Esophagus squamous epithelium (tissue), 5 donors: ENCODE measurements at regions of chr9 and their contacts with region 1.

Region 1: DNA sequence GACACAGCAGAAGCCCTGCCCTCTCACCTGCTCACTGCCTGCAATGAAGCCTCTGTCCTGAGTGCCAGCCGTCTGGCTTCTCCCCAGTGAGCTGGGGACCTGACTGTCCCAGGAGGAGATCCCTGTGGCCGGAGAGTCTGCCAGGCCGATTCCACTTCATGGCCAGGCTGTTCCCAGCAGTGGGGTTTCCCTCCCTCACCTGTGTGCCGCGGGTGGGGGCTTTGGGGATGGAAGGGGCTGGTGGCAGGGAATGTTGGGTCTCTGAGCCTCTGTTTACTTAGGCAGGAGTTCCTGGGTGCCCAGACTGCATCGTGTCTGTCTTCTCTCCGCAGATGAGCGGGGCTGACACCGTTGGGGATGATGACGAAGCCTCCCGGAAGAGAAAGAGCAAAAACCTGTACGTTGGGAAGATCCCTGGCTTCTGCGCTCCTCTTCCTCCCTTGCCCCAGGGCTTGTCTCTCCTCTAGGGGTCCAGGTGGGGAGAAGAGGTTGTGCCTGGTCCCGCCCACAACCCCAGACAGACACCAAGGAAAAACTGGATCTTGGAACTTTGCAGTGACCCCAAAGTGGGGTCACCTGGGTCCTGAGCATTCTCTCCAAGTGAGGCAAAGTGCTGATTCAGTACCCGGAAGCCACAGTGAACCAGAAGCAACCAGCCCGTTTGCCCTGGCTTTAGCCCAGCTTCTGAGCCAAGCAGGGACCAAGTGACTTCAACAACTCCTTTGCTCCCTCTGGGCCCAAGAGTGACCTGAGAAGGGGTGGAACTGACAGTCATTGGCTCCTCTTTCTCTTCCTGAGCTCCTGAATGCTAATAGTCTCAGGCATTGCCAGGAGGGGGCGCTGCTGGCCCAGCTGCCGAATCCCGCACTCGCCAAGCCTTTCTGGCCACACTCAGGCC is 127.7 kb downstream of the RGS3 start:
- DNase-seq: no peak
- H3K4me3 ChIP-seq: no peak overlapping the region
- H3K27ac ChIP-seq: peak overlapping the region; percentile 40 to 62 (median 56)
- H3K4me1 ChIP-seq: peaks cover 16 to 93% (median 55%) of the 10 kb centered on the region in 3 donors
- H3K27me3 ChIP-seq: no peaks in the 10 kb centered on the region
- CTCF ChIP-seq: peak; percentile 67 to 96 (median 92)
- POLR2A ChIP-seq: no peak

Region 2: DNA sequence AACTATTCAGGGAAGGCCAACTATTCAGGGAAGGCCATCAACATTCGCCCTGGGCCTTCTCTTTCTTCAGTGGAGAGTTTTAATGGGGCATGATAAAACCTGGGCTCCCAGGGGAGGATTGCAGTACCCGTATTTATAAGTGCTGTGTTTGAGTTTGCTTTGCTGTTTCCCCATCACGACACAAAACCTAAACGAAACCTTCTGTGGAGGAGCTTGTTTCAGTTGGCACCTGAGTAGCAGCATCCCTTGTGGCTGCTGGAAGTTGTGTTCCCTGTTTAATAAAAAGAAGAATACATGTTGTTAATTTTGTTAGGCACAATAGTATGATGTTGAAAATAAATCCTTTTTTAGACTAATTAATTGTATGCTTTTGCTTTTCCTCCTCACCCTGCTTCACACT is 259.5 kb before region 1 on chr9:
- intact Hi-C with region 1: no loop called
- DNase-seq: no peak
- H3K4me3 ChIP-seq: no peak overlapping the region
- H3K27ac ChIP-seq: no peak overlapping the region
- H3K4me1 ChIP-seq: no peaks in the 10 kb centered on the region
- H3K27me3 ChIP-seq: no peaks in the 10 kb centered on the region
- CTCF ChIP-seq: no peak
- POLR2A ChIP-seq: no peak

Region 3: GRCh38 chr9:113446323-113446740 is 144.9 kb before region 1 on chr9:
- intact Hi-C with region 1: loop called (anchors 5 kb)
- DNase-seq: no peak
- H3K4me3 ChIP-seq: no peak overlapping the region
- H3K27ac ChIP-seq: no peak overlapping the region
- H3K4me1 ChIP-seq: peaks cover 0 to 5% (median 0%) of the 10 kb centered on the region in 3 donors
- H3K27me3 ChIP-seq: no peaks in the 10 kb centered on the region
- CTCF ChIP-seq: peak; percentile 57 to 78 (median 64)
- POLR2A ChIP-seq: no peak

Region 4: DNA sequence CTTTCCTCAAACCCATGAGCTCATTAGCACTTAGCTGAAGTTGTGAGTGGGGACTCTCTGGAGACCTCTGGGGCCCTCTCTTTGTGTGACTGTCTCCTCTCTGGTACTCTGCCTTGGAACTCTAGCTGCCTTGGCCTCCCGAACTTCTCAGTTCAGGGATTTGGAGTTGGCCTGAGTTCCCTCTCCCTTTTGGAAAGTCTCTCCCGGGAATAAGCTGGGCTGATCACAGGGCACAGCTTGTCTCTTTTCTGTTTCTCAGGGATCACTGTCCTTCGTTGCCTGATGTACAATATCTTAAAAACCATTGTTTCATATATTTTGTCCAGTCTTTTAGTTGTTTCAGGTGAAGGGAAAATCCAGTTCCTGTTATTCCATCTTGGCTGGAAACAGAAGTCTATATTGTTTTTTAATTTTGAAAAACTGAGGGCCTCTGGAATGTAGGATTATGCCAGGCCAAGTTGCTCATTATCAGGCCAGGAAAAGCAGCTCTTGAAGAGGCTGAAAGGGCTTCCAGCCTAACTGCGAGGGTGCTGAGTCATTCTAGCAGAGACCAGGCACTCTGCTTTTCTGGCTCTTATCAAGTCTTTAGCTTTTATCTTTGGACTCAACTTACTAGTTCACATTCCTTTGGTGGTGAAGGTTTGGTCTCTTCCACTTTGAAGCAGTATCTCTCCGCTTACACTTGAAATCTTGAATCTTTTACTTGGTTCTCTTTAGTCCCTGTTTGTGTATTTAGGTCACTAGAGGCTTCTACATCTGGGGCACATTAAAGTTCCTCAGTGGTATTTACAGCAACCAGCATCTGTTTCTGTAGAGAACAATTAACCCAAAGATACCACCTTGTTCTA is 136.1 kb before region 1 on chr9:
- intact Hi-C with region 1: loop called (anchors 5 kb)
- DNase-seq: no peak
- H3K4me3 ChIP-seq: no peak overlapping the region
- H3K27ac ChIP-seq: peak overlapping the region; percentile 64 to 83 (median 82)
- H3K4me1 ChIP-seq: peaks cover 0 to 28% (median 15%) of the 10 kb centered on the region in 3 donors
- H3K27me3 ChIP-seq: no peaks in the 10 kb centered on the region
- CTCF ChIP-seq: no peak
- POLR2A ChIP-seq: no peak

Region 5: GRCh38 chr9:113657703-113658544 is 66.7 kb after region 1 on chr9:
- intact Hi-C with region 1: loop called (anchors 2 kb)
- DNase-seq: no peak
- H3K4me3 ChIP-seq: no peak overlapping the region
- H3K27ac ChIP-seq: no peak overlapping the region
- H3K4me1 ChIP-seq: peaks cover 0 to 30% (median 10%) of the 10 kb centered on the region in 3 donors
- H3K27me3 ChIP-seq: peaks cover 0 to 39% (median 0%) of the 10 kb centered on the region in 4 donors
- CTCF ChIP-seq: peak; percentile 85 to 96 (median 94)
- POLR2A ChIP-seq: peak in 1 of 4 donors; percentile 8